ENCODE measurements at regions of chr14 and their contacts with region 1.

Region 1: DNA sequence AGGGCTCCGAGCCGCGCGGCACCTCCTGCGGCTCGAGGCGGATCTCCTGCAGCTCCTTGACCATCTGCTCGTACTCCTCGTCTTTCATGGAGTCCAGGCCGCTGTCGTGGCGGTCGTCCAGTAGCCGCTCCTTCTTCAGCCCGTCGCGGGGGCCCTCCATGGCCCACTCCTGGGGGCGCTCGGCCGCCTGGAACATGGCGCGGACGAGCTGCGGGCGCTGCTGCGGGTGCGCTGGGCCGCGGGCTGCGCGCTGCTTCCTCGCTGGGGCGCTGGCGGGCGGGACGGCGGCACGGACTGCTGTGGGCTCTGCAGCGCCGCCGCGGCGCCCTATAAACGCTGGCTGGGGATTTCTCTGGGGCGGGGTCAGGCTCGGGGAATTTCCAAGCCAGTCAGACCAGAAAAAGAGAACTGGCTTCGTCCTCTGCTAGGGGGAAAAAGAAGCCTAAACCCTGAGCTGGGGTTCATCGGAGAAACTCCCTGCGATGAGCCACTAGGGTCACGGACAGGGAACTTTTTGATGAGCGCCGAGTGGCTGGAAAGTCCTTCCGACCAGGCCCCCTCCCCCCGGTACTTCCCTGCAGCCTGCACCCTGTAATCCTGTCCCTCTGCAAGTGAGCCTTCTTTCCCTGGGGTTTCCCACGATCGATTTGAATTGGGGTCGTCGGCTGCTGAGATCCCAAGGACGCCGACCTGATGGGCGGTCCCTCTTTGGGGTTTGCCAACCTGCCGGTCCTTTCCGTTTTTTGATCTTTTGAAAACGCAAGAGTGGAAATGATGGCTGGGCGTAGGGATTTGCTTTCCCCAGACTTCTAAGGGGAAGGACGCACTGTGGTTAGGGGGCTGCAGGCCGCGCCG is at the start of gene NFKBIA:
- DNase-seq: peak; percentile 98
- H3K4me3 ChIP-seq: peak within 1 kb of the TSS; percentile 73 to 99 (median 95)
- H3K27ac ChIP-seq: peak within 1 kb of the TSS; percentile 98 to 100 (median 99)
- H3K4me1 ChIP-seq: peaks cover 46 to 76% (median 60%) of the 10 kb centered on the region in 6 donors
- H3K27me3 ChIP-seq: no peaks in the 10 kb centered on the region
- CTCF ChIP-seq: peak in 8 of 11 experiments; percentile 8 to 60 (median 39)
- POLR2A ChIP-seq: peak; percentile 82 to 99 (median 99)
- total RNA-seq, gene NFKBIA: 250 to 482 (median 319) TPM

Region 2: GRCh38 chr14:34895277-34895676 is 509.4 kb before region 1 on chr14:
- intact Hi-C with region 1: no loop called
- DNase-seq: no peak
- H3K4me3 ChIP-seq: no peak overlapping the region
- H3K27ac ChIP-seq: no peak overlapping the region
- H3K4me1 ChIP-seq: no peaks in the 10 kb centered on the region
- H3K27me3 ChIP-seq: no peaks in the 10 kb centered on the region
- CTCF ChIP-seq: no peak
- POLR2A ChIP-seq: no peak

Region 3: DNA sequence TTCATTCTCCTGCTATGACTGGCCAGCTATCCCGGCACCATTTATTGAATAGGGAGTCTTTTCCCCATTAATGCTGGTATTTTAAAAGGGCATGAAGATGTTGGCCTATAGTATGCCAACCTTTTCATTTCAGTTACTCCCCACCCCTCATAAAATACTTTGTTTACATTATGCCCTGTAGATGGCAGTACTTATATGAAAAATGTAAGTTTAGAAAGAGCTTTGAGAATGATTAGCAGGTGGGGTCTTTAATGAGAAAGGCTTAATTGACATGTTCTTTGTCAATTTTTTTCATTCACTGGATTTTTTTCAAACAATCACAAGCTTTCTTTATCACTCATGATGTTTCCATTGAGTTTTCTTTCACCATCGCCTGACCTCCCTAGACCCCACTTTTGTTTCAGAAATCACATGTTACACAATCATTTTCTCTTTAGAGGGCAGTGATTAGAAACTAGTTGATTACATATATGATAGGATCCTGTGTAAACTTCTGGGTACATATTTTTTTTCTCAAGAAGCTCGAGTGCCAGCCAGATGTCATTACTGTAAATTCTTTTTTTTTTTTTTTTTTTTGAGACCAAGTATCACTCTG is 175.1 kb before region 1 on chr14:
- intact Hi-C with region 1: loop called (anchors 5 kb)
- DNase-seq: no peak
- H3K4me3 ChIP-seq: no peak overlapping the region
- H3K27ac ChIP-seq: no peak overlapping the region
- H3K4me1 ChIP-seq: peaks cover 0 to 55% (median 16%) of the 10 kb centered on the region in 6 donors
- H3K27me3 ChIP-seq: no peaks in the 10 kb centered on the region
- CTCF ChIP-seq: peak in 7 of 11 experiments; percentile 26 to 54 (median 40)
- POLR2A ChIP-seq: no peak

Region 4: DNA sequence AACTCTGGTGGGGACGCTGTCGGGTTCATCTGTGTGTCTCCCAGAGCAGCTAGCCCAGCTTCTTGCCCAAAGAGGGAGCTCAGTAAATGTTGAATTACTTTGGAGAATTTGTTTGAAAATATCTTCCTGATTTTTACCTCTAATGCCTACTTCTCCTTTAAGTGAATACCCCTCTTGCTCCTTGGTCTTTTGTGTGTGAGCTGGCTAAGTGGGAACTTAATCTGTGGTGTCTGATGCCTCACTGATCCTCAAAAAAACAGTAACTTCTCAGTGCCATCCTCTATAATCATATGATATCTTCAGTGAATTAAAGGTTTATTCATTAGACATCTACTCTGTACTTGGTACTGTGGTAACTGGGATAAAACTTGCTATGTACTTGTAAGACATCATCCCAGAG is 120.2 kb before region 1 on chr14:
- intact Hi-C with region 1: loop called (anchors 5 kb)
- DNase-seq: no peak
- H3K4me3 ChIP-seq: peak overlapping the region in 1 of 8 donors; percentile 56
- H3K27ac ChIP-seq: peak overlapping the region in 7 of 8 donors; percentile 64 to 91 (median 83)
- H3K4me1 ChIP-seq: peaks cover 4 to 46% (median 42%) of the 10 kb centered on the region in 6 donors
- H3K27me3 ChIP-seq: no peaks in the 10 kb centered on the region
- CTCF ChIP-seq: no peak
- POLR2A ChIP-seq: no peak

Region 5: GRCh38 chr14:35336494-35337268 is 68.0 kb before region 1 on chr14:
- intact Hi-C with region 1: loop called (anchors 10 kb)
- DNase-seq: peak; percentile 92
- H3K4me3 ChIP-seq: no peak overlapping the region
- H3K27ac ChIP-seq: peak overlapping the region; percentile 22 to 95 (median 88)
- H3K4me1 ChIP-seq: peaks cover 74 to 100% (median 95%) of the 10 kb centered on the region in 6 donors
- H3K27me3 ChIP-seq: no peaks in the 10 kb centered on the region
- CTCF ChIP-seq: peak in 1 of 11 experiments; percentile 4
- POLR2A ChIP-seq: no peak